Activated CD4-positive, alpha-beta T cell treated with anti-CD3 and anti-CD28 coated beads for 36 hours (primary cell): ENCODE measurements at regions of chr2 and their contacts with region 1.

Region 1: DNA sequence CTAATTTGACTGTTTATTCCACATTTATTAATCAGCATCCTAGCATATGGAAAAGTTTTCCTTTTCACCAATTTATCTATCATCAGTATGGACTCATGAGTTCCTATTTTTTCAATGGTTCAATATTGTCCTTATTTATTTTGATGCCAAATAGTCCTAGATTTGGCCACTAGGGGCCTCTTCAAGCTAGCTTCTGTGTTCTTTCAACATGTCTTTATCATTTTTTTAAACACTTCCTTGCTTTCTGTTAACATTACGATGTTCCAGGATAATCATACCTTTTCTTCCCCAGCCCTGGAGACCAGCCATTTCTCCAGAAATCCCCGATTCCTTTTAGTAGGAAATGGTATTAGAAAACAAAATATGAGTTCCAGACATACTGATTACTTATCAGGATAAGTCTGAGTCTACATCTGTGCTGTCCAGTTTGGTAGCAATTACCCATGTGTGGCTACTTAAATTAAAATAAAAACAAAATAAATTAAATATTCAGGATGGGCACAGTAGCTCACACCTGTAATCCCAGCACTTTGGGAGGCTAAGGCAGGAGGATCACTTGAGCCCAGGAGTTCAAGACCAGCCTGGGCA is 70.6 kb downstream of the RPE start:
- DNase-seq: no peak
- ATAC-seq: no peak
- H3K4me3 Mint-ChIP-seq: no peak overlapping the region
- H3K27ac Mint-ChIP-seq: no peak overlapping the region
- H3K4me1 Mint-ChIP-seq: no peaks in the 10 kb centered on the region
- H3K27me3 Mint-ChIP-seq: no peaks in the 10 kb centered on the region

Region 2: GRCh38 chr2:209977386-209978239 is 95.4 kb before region 1 on chr2:
- CTCF ChIA-PET with region 1: interaction called, 3 read pairs
- POLR2A ChIA-PET with region 1: no interaction called
- intact Hi-C with region 1: loop called in 1 of 2 experiments (anchors 5 kb)
- DNase-seq: no peak
- ATAC-seq: no peak
- H3K4me3 Mint-ChIP-seq: no peak overlapping the region
- H3K27ac Mint-ChIP-seq: no peak overlapping the region
- H3K4me1 Mint-ChIP-seq: no peaks in the 10 kb centered on the region
- H3K27me3 Mint-ChIP-seq: peaks cover 3% of the 10 kb centered on the region

Region 3: DNA sequence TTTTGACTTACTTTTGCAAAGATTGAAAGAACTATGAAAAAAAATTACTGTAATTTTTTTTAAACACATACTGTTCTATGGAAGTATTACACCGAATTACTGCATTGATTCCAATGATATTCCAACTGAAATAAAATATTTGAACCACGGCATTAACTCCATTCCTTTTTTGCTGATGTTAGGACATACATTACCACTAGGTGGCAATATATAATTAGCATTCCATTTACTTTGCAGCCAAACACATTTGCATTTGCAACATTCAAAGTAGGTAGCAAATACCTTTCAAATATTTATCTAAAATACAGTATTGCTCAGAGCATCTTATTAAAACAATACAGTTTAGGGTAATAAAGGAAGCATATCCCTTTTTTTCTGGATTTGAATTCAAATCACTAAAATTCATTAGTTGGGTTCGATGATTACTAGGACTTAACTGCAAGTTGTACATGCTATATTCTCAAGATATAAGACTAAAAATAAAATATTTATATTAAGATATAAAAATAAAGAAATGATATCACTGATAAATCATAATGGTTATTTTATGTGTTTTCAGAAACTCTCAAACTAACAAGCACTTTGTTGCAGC is 372.2 kb after region 1 on chr2:
- CTCF ChIA-PET with region 1: no interaction called
- POLR2A ChIA-PET with region 1: no interaction called
- intact Hi-C with region 1: no loop called
- DNase-seq: no peak
- ATAC-seq: no peak
- H3K4me3 Mint-ChIP-seq: no peak overlapping the region
- H3K27ac Mint-ChIP-seq: no peak overlapping the region
- H3K4me1 Mint-ChIP-seq: peaks cover 5% of the 10 kb centered on the region
- H3K27me3 Mint-ChIP-seq: no peaks in the 10 kb centered on the region